ENCODE measurements at regions of chr2 and their contacts with region 1.

Region 1: GRCh38 chr2:763766-764485 is 86.7 kb upstream of the TMEM18 start:
- DNase-seq: no peak
- ATAC-seq: no peak
- H3K4me3 ChIP-seq: no peak overlapping the region
- H3K4me3 Mint-ChIP-seq: no peak overlapping the region
- H3K27ac ChIP-seq: no peak overlapping the region
- H3K27ac Mint-ChIP-seq: no peak overlapping the region
- H3K4me1 ChIP-seq: peaks cover 7% of the 10 kb centered on the region
- H3K4me1 Mint-ChIP-seq: peaks cover 17% of the 10 kb centered on the region
- H3K27me3 ChIP-seq: no peaks in the 10 kb centered on the region
- H3K27me3 Mint-ChIP-seq: no peaks in the 10 kb centered on the region
- CTCF ChIP-seq: no peak

Region 2: DNA sequence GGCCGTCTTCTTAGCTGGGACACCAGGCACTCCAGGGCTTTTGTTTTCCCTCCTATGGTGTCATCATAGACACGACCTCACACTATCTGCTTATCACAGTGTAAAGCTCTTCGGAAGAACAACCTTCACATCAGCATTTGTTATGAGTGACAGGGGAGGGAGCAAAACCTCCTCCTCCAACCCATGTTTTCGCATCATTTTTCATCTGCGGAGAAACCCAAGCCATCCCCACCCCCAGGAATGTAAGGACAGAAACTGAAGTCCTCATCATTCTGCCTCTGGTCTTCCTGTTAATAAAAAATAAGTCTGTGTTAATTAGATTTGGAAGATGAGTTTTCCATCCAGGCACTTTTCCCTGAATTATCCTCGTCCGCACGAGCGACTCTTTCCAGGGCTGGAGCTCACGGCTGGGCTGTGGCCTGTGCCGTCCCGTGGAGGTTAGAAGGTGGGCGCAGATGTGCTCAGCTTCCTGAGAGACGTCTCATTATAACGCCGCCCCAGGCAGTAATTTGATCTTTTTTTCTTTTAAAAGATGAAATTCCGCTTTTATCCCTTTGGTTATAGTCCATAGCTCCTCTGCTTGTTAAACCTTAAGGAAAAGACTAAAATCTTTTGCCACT is 14.9 kb after region 1 on chr2:
- CTCF ChIA-PET with region 1: no interaction called
- POLR2A ChIA-PET with region 1: interaction called, 3 read pairs
- intact Hi-C with region 1: loop called in 1 of 2 experiments (anchors 1 kb)
- DNase-seq: no peak
- ATAC-seq: no peak
- H3K4me3 ChIP-seq: no peak overlapping the region
- H3K4me3 Mint-ChIP-seq: no peak overlapping the region
- H3K27ac ChIP-seq: no peak overlapping the region
- H3K27ac Mint-ChIP-seq: no peak overlapping the region
- H3K4me1 ChIP-seq: no peaks in the 10 kb centered on the region
- H3K4me1 Mint-ChIP-seq: no peaks in the 10 kb centered on the region
- H3K27me3 ChIP-seq: no peaks in the 10 kb centered on the region
- H3K27me3 Mint-ChIP-seq: peaks cover 6% of the 10 kb centered on the region
- CTCF ChIP-seq: no peak

Region 3: DNA sequence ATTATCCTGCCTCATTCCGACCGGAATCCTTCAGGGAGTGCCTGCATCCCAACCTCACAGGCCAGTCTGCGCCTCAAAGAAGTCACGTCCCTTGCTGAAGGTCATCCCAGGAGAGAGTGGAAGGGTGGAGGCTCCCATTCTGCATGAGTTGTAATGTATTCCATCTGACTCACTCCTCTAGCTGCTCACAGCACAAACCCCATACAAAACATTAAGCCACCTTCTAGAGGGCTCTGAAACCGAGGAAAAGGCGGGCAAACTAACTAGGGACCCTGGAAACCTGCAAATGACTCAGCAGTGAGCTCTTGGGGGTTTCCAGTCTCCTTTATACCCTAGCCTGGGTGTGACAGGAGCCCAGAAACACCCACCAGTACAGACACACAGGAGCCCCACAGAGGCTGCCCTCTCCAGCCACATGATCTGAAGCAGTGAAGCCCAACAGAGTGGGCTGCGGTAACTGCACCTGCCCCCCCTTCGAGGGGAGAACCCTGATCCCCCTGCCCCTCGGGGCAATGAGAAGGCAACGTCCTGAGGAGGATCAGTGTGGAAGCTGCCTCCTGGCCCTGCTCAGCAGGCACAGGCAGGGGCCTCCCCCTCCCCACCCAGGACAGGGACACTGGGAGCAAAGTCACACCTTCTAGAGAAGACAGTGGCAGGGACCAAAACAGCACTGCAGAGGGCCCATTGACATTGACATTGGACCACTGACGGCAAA is 117.4 kb after region 1 on chr2:
- CTCF ChIA-PET with region 1: no interaction called
- POLR2A ChIA-PET with region 1: no interaction called
- intact Hi-C with region 1: no loop called
- DNase-seq: peak in 1 of 9 experiments; percentile 25
- ATAC-seq: no peak
- H3K4me3 ChIP-seq: no peak overlapping the region
- H3K4me3 Mint-ChIP-seq: no peak overlapping the region
- H3K27ac ChIP-seq: no peak overlapping the region
- H3K27ac Mint-ChIP-seq: no peak overlapping the region
- H3K4me1 ChIP-seq: no peaks in the 10 kb centered on the region
- H3K4me1 Mint-ChIP-seq: no peaks in the 10 kb centered on the region
- H3K27me3 ChIP-seq: no peaks in the 10 kb centered on the region
- H3K27me3 Mint-ChIP-seq: peaks cover 20% of the 10 kb centered on the region
- CTCF ChIP-seq: no peak